B cell (primary cell): ENCODE measurements at regions of chr17 and their contacts with region 1.

Region 1: DNA sequence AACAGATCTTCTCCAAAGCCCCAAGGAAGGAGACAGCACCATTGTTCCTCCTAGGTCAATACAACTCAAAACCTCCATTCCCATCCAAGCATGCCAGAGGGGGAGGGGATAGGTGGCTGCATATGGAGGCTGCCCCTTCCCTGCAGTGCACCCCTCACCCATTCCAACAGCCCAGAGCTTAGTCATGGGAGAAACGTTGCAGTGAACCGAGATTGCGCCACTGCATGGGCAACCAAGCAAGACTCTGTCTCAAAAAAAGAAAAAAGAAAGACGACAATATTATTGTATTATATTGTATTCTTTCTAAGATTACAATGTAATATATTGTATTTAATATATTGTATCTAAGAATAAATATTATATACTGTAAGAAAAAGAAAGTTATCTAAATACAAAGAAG is 36.4 kb upstream of the CD300E start:
- DNase-seq: no peak
- ATAC-seq: no peak
- H3K4me3 ChIP-seq: no peak overlapping the region
- H3K4me3 Mint-ChIP-seq: no peak overlapping the region
- H3K27ac ChIP-seq: no peak overlapping the region
- H3K27ac Mint-ChIP-seq: no peak overlapping the region
- H3K4me1 ChIP-seq: peaks cover 3 to 5% of the 10 kb centered on the region in 2 donors
- H3K4me1 Mint-ChIP-seq: peaks cover 8% of the 10 kb centered on the region
- H3K27me3 ChIP-seq: peaks cover 0 to 8% (median 2%) of the 10 kb centered on the region in 4 experiments
- H3K27me3 Mint-ChIP-seq: peaks cover 54% of the 10 kb centered on the region
- CTCF ChIP-seq: no peak

Region 2: DNA sequence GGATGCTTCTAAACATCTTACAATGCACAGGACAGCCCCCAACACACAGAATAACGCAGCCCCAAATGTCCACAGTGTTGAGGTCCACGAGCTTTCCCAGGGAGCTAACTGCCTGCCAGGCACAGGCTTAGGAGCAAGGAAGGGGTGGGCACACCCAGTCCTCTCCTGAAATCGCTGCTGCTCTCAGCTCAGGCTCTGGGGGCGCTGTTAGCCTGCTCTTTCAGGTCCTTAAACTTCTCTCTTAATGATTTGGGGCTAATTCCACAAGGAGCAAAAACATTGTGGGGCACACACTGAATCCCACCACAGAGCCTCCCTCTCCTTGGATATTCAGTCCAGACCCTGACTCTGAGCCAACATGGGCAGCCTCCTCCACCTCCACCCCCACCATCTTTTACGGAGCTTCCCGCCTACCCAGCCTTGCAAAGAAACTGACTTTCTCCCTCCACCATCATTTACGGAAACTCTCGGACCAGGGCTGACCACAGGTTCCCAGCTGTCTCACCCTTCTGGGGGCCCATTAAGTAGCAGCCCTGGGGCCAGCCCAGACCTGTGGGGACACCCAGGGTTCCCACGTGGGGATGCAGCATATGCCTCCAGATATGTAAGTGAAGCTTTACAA is 93.7 kb before region 1 on chr17:
- CTCF ChIA-PET with region 1: interaction called, 29 read pairs
- POLR2A ChIA-PET with region 1: no interaction called
- intact Hi-C with region 1: loop called (anchors 1 kb)
- DNase-seq: peak; percentile 59
- ATAC-seq: peak; percentile 39
- H3K4me3 ChIP-seq: no peak overlapping the region
- H3K4me3 Mint-ChIP-seq: no peak overlapping the region
- H3K27ac ChIP-seq: no peak overlapping the region
- H3K27ac Mint-ChIP-seq: no peak overlapping the region
- H3K4me1 ChIP-seq: peaks cover 21 to 28% of the 10 kb centered on the region in 2 donors
- H3K4me1 Mint-ChIP-seq: peaks cover 10% of the 10 kb centered on the region
- H3K27me3 ChIP-seq: peaks cover 0 to 50% (median 6%) of the 10 kb centered on the region in 4 experiments
- H3K27me3 Mint-ChIP-seq: peaks cover 61% of the 10 kb centered on the region
- CTCF ChIP-seq: peak; percentile 64

Region 3: GRCh38 chr17:74646231-74646630 is 13.7 kb before region 1 on chr17:
- CTCF ChIA-PET with region 1: interaction called, 25 read pairs
- POLR2A ChIA-PET with region 1: interaction called, 3 read pairs
- intact Hi-C with region 1: no loop called
- DNase-seq: peak; percentile 60
- ATAC-seq: peak; percentile 50
- H3K4me3 ChIP-seq: no peak overlapping the region
- H3K4me3 Mint-ChIP-seq: no peak overlapping the region
- H3K27ac ChIP-seq: no peak overlapping the region
- H3K27ac Mint-ChIP-seq: peak overlapping the region; percentile 50
- H3K4me1 ChIP-seq: peaks cover 32 to 37% of the 10 kb centered on the region in 2 donors
- H3K4me1 Mint-ChIP-seq: peaks cover 43% of the 10 kb centered on the region
- H3K27me3 ChIP-seq: peaks cover 0 to 32% (median 12%) of the 10 kb centered on the region in 4 experiments
- H3K27me3 Mint-ChIP-seq: peaks cover 47% of the 10 kb centered on the region
- CTCF ChIP-seq: peak; percentile 56

Region 4: GRCh38 chr17:74712756-74713155 is 52.9 kb after region 1 on chr17 and contains the start of gene CD300LF:
- CTCF ChIA-PET with region 1: interaction called, 3 read pairs
- POLR2A ChIA-PET with region 1: no interaction called
- intact Hi-C with region 1: loop called (anchors 2 kb)
- DNase-seq: peak; percentile 62
- ATAC-seq: peak; percentile 73
- H3K4me3 ChIP-seq: peak within 1 kb of the TSS in 1 of 5 experiments; percentile 32
- H3K4me3 Mint-ChIP-seq: peak within 1 kb of the TSS; percentile 41
- H3K27ac ChIP-seq: peak within 1 kb of the TSS; percentile 34 to 59
- H3K27ac Mint-ChIP-seq: peak within 1 kb of the TSS; percentile 78
- H3K4me1 ChIP-seq: peaks cover 15 to 18% of the 10 kb centered on the region in 2 donors
- H3K4me1 Mint-ChIP-seq: peaks cover 21% of the 10 kb centered on the region
- H3K27me3 ChIP-seq: peaks cover 0 to 7% (median 0%) of the 10 kb centered on the region in 4 experiments
- H3K27me3 Mint-ChIP-seq: peaks cover 6% of the 10 kb centered on the region
- CTCF ChIP-seq: no peak
- total RNA-seq, gene CD300LF: 0.52 and 1.0 TPM in 2 replicates

Region 5: GRCh38 chr17:74748529-74749365 is 88.8 kb after region 1 on chr17 and contains the start of gene NHERF1:
- CTCF ChIA-PET with region 1: interaction called, 51 read pairs
- POLR2A ChIA-PET with region 1: interaction called, 3 read pairs
- intact Hi-C with region 1: no loop called
- DNase-seq: peak; percentile 95
- ATAC-seq: peak; percentile 95
- H3K4me3 ChIP-seq: peak within 1 kb of the TSS; percentile 51 to 99 (median 90)
- H3K4me3 Mint-ChIP-seq: peak within 1 kb of the TSS; percentile 91
- H3K27ac ChIP-seq: peak within 1 kb of the TSS; percentile 45 to 80
- H3K27ac Mint-ChIP-seq: peak within 1 kb of the TSS; percentile 82
- H3K4me1 ChIP-seq: peaks cover 43 to 56% of the 10 kb centered on the region in 2 donors
- H3K4me1 Mint-ChIP-seq: peaks cover 58% of the 10 kb centered on the region
- H3K27me3 ChIP-seq: no peaks in the 10 kb centered on the region
- H3K27me3 Mint-ChIP-seq: no peaks in the 10 kb centered on the region
- CTCF ChIP-seq: no peak
- total RNA-seq, gene NHERF1: 69.5 and 81.8 TPM in 2 replicates

Region 6: DNA sequence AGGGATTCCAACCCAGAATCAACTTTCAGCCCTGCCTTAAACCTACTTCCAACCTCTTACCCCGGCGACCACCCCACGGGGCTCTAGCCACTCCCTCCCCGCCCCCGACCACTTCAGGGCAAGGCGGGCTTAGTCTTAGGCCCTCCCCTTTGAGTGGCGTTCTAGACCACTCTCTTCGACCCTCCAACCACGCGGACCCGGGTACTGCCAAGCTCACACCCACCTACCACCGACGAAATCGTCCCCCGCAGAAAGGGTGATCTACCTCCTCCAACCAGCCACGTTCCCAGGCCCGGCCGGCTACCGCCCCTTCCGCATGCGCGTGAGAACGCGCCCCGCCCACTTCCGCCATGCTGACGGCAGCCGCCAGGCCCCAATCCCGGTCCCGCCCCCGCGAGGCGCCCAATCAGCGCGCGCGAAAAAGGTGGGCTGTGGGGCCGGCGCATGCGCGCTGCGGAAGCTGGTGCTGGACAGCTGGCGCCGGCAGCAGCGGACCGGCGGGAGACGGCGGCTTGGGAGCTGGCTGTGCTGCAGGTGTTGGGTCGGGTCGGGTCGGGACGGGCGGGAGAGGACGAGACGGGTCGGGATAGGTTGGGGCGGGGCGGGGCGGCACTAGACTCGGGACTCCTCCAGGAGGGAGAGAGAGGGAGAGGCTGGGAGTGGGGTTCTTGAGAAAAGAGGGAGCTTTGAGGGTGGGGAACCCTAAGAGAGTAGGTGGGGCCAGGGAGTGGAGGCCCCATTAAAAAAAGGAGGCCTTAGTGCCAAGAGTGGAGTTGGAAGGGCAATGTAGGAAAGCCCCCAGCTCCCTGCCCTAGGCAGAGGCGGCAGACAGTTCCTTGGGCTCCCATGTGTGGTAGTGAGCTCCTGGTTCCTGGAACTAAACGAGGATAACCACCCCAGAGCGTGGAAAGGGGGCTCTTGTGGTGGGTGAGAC is 116.4 kb after region 1 on chr17 and contains the start of gene NAT9:
- CTCF ChIA-PET with region 1: interaction called, 191 read pairs
- POLR2A ChIA-PET with region 1: interaction called, 5 read pairs
- intact Hi-C with region 1: no loop called
- DNase-seq: peak; percentile 98
- ATAC-seq: peak; percentile 79
- H3K4me3 ChIP-seq: peak within 1 kb of the TSS; percentile 66 to 79 (median 77)
- H3K4me3 Mint-ChIP-seq: peak within 1 kb of the TSS; percentile 99
- H3K27ac ChIP-seq: peak within 1 kb of the TSS; percentile 39 to 75
- H3K27ac Mint-ChIP-seq: peak within 1 kb of the TSS; percentile 96
- H3K4me1 ChIP-seq: peaks cover 40 to 46% of the 10 kb centered on the region in 2 donors
- H3K4me1 Mint-ChIP-seq: peaks cover 57% of the 10 kb centered on the region
- H3K27me3 ChIP-seq: no peaks in the 10 kb centered on the region
- H3K27me3 Mint-ChIP-seq: no peaks in the 10 kb centered on the region
- CTCF ChIP-seq: no peak
- total RNA-seq, gene NAT9: 66.6 and 71.1 TPM in 2 replicates

Region 7: GRCh38 chr17:74873038-74873873 is 213.4 kb after region 1 on chr17:
- CTCF ChIA-PET with region 1: interaction called, 12 read pairs
- POLR2A ChIA-PET with region 1: no interaction called
- intact Hi-C with region 1: no loop called
- DNase-seq: peak; percentile 100
- ATAC-seq: peak; percentile 93
- H3K4me3 ChIP-seq: peak overlapping the region; percentile 78 to 91 (median 86)
- H3K4me3 Mint-ChIP-seq: peak overlapping the region; percentile 81
- H3K27ac ChIP-seq: peak overlapping the region; percentile 95 to 96
- H3K27ac Mint-ChIP-seq: peak overlapping the region; percentile 94
- H3K4me1 ChIP-seq: peaks cover 12 to 15% of the 10 kb centered on the region in 2 donors
- H3K4me1 Mint-ChIP-seq: peaks cover 12% of the 10 kb centered on the region
- H3K27me3 ChIP-seq: no peaks in the 10 kb centered on the region
- H3K27me3 Mint-ChIP-seq: no peaks in the 10 kb centered on the region
- CTCF ChIP-seq: no peak

Region 8: DNA sequence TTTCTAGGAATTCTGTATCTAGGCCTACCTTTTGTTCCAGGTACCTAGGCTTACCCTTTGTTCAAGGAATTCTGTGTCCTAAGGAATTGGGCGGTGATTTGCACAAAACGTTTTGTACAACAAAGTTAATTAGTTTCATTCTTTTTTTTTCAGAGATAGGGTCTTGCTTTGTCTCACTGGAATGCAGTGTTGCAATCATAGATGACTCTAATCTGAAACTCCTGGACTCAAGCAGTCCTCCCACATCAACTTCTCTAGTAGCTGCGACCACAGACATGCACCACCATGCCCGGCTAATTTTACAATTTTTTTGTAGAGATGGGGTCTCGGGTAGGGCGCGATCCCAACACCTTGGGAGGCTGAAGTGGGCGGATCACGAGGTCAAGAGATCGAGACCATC is 334.6 kb after region 1 on chr17:
- CTCF ChIA-PET with region 1: no interaction called
- POLR2A ChIA-PET with region 1: no interaction called
- intact Hi-C with region 1: no loop called
- DNase-seq: no peak
- ATAC-seq: no peak
- H3K4me3 ChIP-seq: no peak overlapping the region
- H3K4me3 Mint-ChIP-seq: no peak overlapping the region
- H3K27ac ChIP-seq: no peak overlapping the region
- H3K27ac Mint-ChIP-seq: no peak overlapping the region
- H3K4me1 ChIP-seq: no peaks in the 10 kb centered on the region
- H3K4me1 Mint-ChIP-seq: no peaks in the 10 kb centered on the region
- H3K27me3 ChIP-seq: peaks cover 0 to 11% (median 0%) of the 10 kb centered on the region in 4 experiments
- H3K27me3 Mint-ChIP-seq: peaks cover 11% of the 10 kb centered on the region
- CTCF ChIP-seq: no peak